BJ (cell line): ENCODE measurements at regions of chr19 and their contacts with region 1.

Region 1: GRCh38 chr19:1269065-1269477 is at the start of gene CIRBP:
- DNase-seq: peak; percentile 92
- H3K4me3 ChIP-seq: peak within 1 kb of the TSS; percentile 66
- H3K27me3 ChIP-seq: no peaks in the 10 kb centered on the region
- CTCF ChIP-seq: no peak
- polyA plus RNA-seq, gene CIRBP: 342 and 372 TPM in 2 replicates

Region 2: GRCh38 chr19:1232652-1233072 is 36.4 kb before region 1 on chr19:
- CTCF ChIA-PET with region 1: no interaction called
- POLR2A ChIA-PET with region 1: interaction called, 13 read pairs
- DNase-seq: no peak
- H3K4me3 ChIP-seq: no peak overlapping the region
- H3K27me3 ChIP-seq: no peaks in the 10 kb centered on the region
- CTCF ChIP-seq: no peak

Region 3: DNA sequence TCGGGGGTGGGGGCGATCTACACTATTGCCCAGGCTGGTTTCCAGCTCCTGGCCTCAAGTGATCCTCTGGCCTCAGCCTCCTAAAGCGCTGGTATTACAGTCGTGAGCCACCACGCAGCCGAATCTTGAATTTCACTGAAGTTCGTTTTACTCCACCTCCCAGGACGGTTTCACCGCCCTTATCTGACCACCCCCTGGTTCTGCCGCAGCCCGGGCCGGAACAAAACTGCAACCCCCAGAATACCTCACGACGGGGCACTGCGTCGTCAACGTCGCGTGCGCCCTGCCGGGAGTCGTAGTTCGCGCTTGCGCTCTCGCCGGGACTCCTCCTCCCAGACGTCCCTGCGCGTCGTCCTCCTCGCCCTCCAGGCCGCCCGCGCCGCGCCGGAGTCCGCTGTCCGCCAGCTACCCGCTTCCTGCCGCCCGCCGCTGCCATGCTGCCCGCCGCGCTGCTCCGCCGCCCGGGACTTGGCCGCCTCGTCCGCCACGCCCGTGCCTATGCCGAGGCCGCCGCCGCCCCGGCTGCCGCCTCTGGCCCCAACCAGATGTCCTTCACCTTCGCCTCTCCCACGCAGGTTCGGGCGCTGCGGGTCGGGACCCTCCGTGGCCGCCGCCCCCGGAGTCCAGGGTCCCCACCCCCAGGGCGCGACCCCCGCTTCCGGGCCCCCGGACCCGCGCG is 27.5 kb before region 1 on chr19 and contains the start of gene ATP5F1D:
- CTCF ChIA-PET with region 1: interaction called, 437 read pairs
- POLR2A ChIA-PET with region 1: interaction called, 78 read pairs
- DNase-seq: no peak
- H3K4me3 ChIP-seq: peak within 1 kb of the TSS; percentile 75
- H3K27me3 ChIP-seq: no peaks in the 10 kb centered on the region
- CTCF ChIP-seq: no peak
- polyA plus RNA-seq, gene ATP5F1D: 57.9 and 65.1 TPM in 2 replicates

Region 4: DNA sequence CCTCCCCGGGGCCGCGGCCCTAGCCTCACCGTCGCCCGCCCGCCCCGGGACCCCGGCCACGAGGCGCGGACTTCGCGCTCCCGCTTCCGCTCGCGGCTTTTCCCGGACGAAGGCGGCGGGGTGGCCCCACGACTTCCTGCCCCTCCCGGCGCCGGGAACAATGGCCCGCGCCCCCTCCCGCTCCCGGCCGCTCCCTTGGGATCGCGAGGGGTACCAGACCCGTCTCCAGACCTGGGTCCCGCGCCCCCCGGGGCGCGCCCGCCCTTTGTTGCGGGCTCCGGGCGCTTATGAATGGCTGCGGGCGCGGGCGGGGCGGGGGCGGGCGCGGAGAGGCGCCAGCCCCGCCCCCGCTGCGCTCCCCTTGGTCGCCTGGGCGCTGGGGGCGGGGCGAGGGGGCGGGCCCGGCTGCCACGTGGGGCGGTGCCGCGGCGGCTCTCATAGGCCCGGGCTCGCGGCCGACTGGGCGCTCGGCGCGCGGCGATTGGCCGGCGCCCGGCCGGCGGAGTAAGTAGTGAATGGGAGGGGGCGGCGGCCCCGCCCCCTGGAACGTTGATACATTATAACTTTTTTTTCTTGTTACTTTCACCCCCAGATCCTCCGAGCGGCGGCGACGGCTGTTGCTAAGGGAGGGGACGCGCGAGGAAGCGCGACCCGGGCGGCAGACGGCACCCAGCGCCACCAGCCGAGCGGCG is 19.6 kb before region 1 on chr19:
- CTCF ChIA-PET with region 1: interaction called, 437 read pairs
- POLR2A ChIA-PET with region 1: interaction called, 78 read pairs
- DNase-seq: no peak
- H3K4me3 ChIP-seq: peak overlapping the region; percentile 81
- H3K27me3 ChIP-seq: no peaks in the 10 kb centered on the region
- CTCF ChIP-seq: no peak

Region 5: DNA sequence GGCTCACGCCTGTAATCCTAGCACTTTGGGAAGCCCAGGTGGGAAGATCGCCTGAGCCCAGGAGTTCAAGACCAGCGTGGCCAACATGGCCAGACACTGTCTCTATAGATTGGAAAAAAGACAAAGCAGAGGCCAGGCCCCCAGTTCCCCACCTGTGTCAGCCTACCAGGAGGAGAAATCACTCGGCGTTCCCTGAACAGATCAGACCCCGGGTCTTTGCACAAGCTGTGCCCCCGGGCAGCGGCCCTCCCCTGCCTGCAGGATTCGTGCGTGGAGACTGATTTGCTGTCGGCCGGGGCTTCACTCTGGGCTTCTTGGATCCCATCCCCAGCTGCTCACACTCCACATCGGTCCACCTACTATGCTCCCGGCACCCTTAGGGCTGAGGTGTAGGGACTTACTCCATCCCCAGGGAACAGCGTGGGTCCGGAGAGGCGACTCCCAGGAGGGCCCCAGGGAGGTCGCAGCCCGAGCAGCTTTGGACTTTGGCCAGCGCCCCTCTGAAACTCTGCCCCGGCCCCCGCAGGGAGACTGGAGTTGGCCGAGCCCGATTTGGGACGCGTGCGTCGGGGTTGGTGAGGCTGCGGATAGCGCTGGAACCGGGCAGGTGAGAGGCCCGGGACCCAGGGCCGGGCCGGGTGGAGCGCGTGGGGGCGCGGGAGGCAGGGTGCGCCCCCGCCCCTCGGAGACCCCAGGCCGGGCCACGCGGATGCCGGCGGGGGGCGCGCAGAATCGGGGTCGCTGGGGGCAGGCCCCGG is 16.1 kb after region 1 on chr19:
- CTCF ChIA-PET with region 1: interaction called, 5 read pairs
- POLR2A ChIA-PET with region 1: interaction called, 17 read pairs
- DNase-seq: no peak
- H3K4me3 ChIP-seq: no peak overlapping the region
- H3K27me3 ChIP-seq: peaks cover 22% of the 10 kb centered on the region
- CTCF ChIP-seq: no peak

Region 6: DNA sequence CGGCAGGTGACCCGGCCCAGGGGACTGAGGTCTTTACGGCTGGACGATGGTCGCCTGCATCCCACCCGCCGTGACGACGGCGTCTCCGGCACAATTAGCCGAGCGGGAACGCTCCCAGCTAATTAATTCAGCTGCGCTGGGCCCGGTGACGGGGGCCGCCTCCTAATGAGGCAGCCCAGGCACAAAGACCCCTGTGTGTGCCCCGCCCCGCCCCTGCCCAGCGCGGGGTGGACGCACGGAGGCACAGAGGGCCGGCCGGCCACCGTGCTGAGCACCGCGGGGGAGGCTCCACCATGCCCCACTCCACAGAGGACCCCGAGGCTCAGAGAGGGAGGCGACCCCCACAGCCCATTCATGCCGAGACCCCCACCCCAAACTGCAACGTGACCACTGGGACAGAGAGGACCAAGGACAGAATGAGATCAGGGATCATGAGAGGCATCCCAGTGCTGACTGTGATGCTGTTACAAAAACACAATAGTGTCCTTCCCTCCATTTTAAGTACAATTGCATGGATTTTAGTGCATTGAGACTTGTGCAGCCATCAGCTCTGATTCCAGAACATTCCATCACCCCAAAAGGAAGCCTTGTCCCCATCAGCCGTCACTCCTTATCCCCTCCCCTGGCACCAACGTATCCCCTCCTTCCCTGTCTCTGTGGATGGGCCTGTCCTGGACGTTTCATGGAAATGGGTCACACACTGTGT is 33.6 kb after region 1 on chr19:
- CTCF ChIA-PET with region 1: no interaction called
- POLR2A ChIA-PET with region 1: no interaction called
- DNase-seq: no peak
- H3K4me3 ChIP-seq: no peak overlapping the region
- H3K27me3 ChIP-seq: no peaks in the 10 kb centered on the region
- CTCF ChIP-seq: no peak

Region 7: DNA sequence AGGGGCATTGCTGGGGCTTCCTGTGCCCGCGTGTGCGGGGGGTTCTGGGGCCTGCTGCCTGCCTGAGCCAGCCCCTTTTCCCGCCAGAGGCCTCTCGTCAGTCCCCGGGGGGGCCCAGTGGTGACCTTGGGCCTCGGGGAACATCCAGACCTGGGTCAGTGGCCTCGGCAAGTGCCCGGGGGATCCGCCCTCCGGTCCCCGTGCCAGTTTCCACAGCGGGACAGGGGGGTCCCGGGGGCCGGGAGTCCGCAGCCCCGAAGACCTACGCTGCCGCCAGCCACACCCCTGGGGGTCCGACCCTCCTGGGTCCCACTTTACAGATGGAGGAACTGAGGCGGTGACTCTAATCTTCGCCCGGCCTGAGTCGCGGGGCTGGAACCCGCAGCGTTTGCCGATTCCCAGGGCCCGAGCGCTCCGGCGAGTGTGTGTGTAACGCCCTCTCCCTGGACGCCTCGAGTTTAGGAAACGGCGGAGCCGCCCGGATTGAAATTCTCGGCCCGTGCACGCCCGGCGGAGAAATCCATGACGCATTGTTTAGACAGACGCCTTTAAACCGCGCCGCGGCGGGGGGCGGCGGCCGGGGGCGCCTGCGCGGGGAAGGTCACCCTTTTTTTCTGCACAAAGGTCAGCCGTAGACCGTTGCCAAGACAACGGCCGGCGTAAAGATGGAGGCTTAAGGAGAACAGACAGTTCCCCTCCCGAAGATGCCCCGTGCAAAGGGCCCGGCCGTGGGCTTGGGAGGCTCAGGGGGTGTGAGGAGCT is 55.9 kb after region 1 on chr19:
- CTCF ChIA-PET with region 1: no interaction called
- POLR2A ChIA-PET with region 1: no interaction called
- DNase-seq: peak; percentile 12
- H3K4me3 ChIP-seq: peak overlapping the region; percentile 13
- H3K27me3 ChIP-seq: no peaks in the 10 kb centered on the region
- CTCF ChIP-seq: no peak